ENCODE measurements at regions of chr2 and their contacts with region 1.

Region 1: GRCh38 chr2:130342533-130343275 is at the start of gene IMP4:
- DNase-seq: peak; percentile 75 to 98 (median 96)
- ATAC-seq: peak; percentile 85 to 87
- H3K4me3 Mint-ChIP-seq: peak within 1 kb of the TSS; percentile 97 to 100 (median 100)
- H3K27ac Mint-ChIP-seq: peak within 1 kb of the TSS; percentile 98 to 100 (median 99)
- H3K4me1 Mint-ChIP-seq: peaks cover 26 to 57% (median 43%) of the 10 kb centered on the region in 4 donors
- H3K27me3 Mint-ChIP-seq: no peaks in the 10 kb centered on the region
- polyA plus RNA-seq, gene IMP4: 58.4 to 96.7 (median 84.9) TPM

Region 2: GRCh38 chr2:130181325-130181879 is 161.3 kb before region 1 on chr2 and contains the start of gene SMPD4:
- POLR2A ChIA-PET with region 1: interaction called, 60 read pairs
- DNase-seq: peak; percentile 95 to 99 (median 98)
- ATAC-seq: peak; percentile 76 to 77
- H3K4me3 Mint-ChIP-seq: peak within 1 kb of the TSS; percentile 87 to 95 (median 91)
- H3K27ac Mint-ChIP-seq: peak within 1 kb of the TSS; percentile 85 to 99 (median 96)
- H3K4me1 Mint-ChIP-seq: peaks cover 5 to 43% (median 35%) of the 10 kb centered on the region in 4 donors
- H3K27me3 Mint-ChIP-seq: no peaks in the 10 kb centered on the region
- polyA plus RNA-seq, gene SMPD4: 21.9 to 44.4 (median 35.4) TPM

Region 3: GRCh38 chr2:130332271-130333073 is 10.2 kb before region 1 on chr2:
- POLR2A ChIA-PET with region 1: interaction called, 14 read pairs
- DNase-seq: peak; percentile 47 to 83 (median 62)
- ATAC-seq: peak; percentile 89 to 97
- H3K4me3 Mint-ChIP-seq: peak overlapping the region in 7 of 10 donors; percentile 26 to 70 (median 55)
- H3K27ac Mint-ChIP-seq: peak overlapping the region in 2 of 10 donors; percentile 17 to 38
- H3K4me1 Mint-ChIP-seq: peaks cover 0 to 6% (median 2%) of the 10 kb centered on the region in 4 donors
- H3K27me3 Mint-ChIP-seq: peaks cover 19 to 35% (median 25%) of the 10 kb centered on the region in 5 donors

Region 4: GRCh38 chr2:130355578-130356431 is 13.1 kb after region 1 on chr2 and contains the start of gene PTPN18:
- POLR2A ChIA-PET with region 1: interaction called, 54 read pairs
- DNase-seq: peak in 9 of 10 donors; percentile 23 to 58 (median 50)
- ATAC-seq: peak; percentile 86 to 91
- H3K4me3 Mint-ChIP-seq: peak within 1 kb of the TSS; percentile 73 to 88 (median 83)
- H3K27ac Mint-ChIP-seq: peak within 1 kb of the TSS in 9 of 10 donors; percentile 28 to 86 (median 71)
- H3K4me1 Mint-ChIP-seq: peaks cover 11 to 23% (median 13%) of the 10 kb centered on the region in 4 donors
- H3K27me3 Mint-ChIP-seq: no peaks in the 10 kb centered on the region
- polyA plus RNA-seq, gene PTPN18: 33.7 to 47.5 (median 33.9) TPM

Region 5: GRCh38 chr2:130372055-130372832 is 29.5 kb after region 1 on chr2:
- POLR2A ChIA-PET with region 1: interaction called, 69 read pairs
- DNase-seq: peak; percentile 37 to 81 (median 65)
- ATAC-seq: peak; percentile 78
- H3K4me3 Mint-ChIP-seq: peak overlapping the region; percentile 88 to 97 (median 92)
- H3K27ac Mint-ChIP-seq: peak overlapping the region; percentile 80 to 98 (median 94)
- H3K4me1 Mint-ChIP-seq: peaks cover 33 to 72% (median 67%) of the 10 kb centered on the region in 4 donors
- H3K27me3 Mint-ChIP-seq: no peaks in the 10 kb centered on the region

Region 6: GRCh38 chr2:130380096-130380934 is 37.6 kb after region 1 on chr2:
- POLR2A ChIA-PET with region 1: interaction called, 13 read pairs
- DNase-seq: no peak
- ATAC-seq: no peak
- H3K4me3 Mint-ChIP-seq: no peak overlapping the region
- H3K27ac Mint-ChIP-seq: peak overlapping the region in 2 of 10 donors; percentile 55 to 60
- H3K4me1 Mint-ChIP-seq: peaks cover 23 to 62% (median 49%) of the 10 kb centered on the region in 4 donors
- H3K27me3 Mint-ChIP-seq: no peaks in the 10 kb centered on the region

Region 7: GRCh38 chr2:131093006-131093695 is 750.4 kb after region 1 on chr2 and contains the start of gene FAM168B:
- POLR2A ChIA-PET with region 1: interaction called, 10 read pairs
- DNase-seq: peak; percentile 82 to 93 (median 90)
- ATAC-seq: peak; percentile 85 to 86
- H3K4me3 Mint-ChIP-seq: peak within 1 kb of the TSS; percentile 88 to 98 (median 94)
- H3K27ac Mint-ChIP-seq: peak within 1 kb of the TSS; percentile 90 to 98 (median 96)
- H3K4me1 Mint-ChIP-seq: peaks cover 5 to 34% (median 18%) of the 10 kb centered on the region in 4 donors
- H3K27me3 Mint-ChIP-seq: no peaks in the 10 kb centered on the region
- polyA plus RNA-seq, gene FAM168B: 29.9 to 43.8 (median 35.8) TPM

Measured in naive thymus-derived CD8-positive, alpha-beta T cell (primary cell).